ENCODE measurements at regions of chr4 and their contacts with region 1.

Region 1: GRCh38 chr4:47145630-47146029 is 114.3 kb downstream of the GABRB1 start:
- ATAC-seq: peak; percentile 24 to 99 (median 98)
- H3K4me3 ChIP-seq: no peak overlapping the region
- H3K27ac ChIP-seq: no peak overlapping the region
- H3K4me1 ChIP-seq: peaks cover 15% of the 10 kb centered on the region in 2 donors

Region 2: GRCh38 chr4:47359891-47360290 is 214.3 kb after region 1 on chr4:
- in situ Hi-C with region 1: no loop called
- ATAC-seq: no peak
- H3K4me3 ChIP-seq: no peak overlapping the region
- H3K27ac ChIP-seq: no peak overlapping the region
- H3K4me1 ChIP-seq: no peaks in the 10 kb centered on the region

Region 3: GRCh38 chr4:47383829-47384427 is 238.3 kb after region 1 on chr4:
- in situ Hi-C with region 1: loop called in 1 of 9 experiments (anchors 25 kb)
- ATAC-seq: peak in 1 of 8 experiments; percentile 36
- H3K4me3 ChIP-seq: no peak overlapping the region
- H3K27ac ChIP-seq: no peak overlapping the region
- H3K4me1 ChIP-seq: peaks cover 6 to 24% of the 10 kb centered on the region in 2 donors

Measured in motor neuron (in vitro differentiated cells).